Activated B cell treated with CpG ODN at 0.5 μM for 24 hours (primary cell): ENCODE measurements at regions of chr6 and their contacts with region 1.

Region 1: GRCh38 chr6:99746261-99746895 is 139.7 kb downstream of the PRDM13 start:
- DNase-seq: no peak
- ATAC-seq: peak; percentile 82
- H3K4me3 Mint-ChIP-seq: no peak overlapping the region
- H3K27ac Mint-ChIP-seq: no peak overlapping the region
- H3K4me1 Mint-ChIP-seq: no peaks in the 10 kb centered on the region
- H3K27me3 Mint-ChIP-seq: peaks cover 21% of the 10 kb centered on the region
- CTCF ChIP-seq: peak; percentile 16

Region 2: GRCh38 chr6:99330159-99330558 is 416.2 kb before region 1 on chr6:
- CTCF ChIA-PET with region 1: interaction called, 8 read pairs
- POLR2A ChIA-PET with region 1: no interaction called
- intact Hi-C with region 1: loop called (anchors 1 kb)
- DNase-seq: no peak
- ATAC-seq: peak; percentile 82
- H3K4me3 Mint-ChIP-seq: no peak overlapping the region
- H3K27ac Mint-ChIP-seq: no peak overlapping the region
- H3K4me1 Mint-ChIP-seq: peaks cover 14% of the 10 kb centered on the region
- H3K27me3 Mint-ChIP-seq: no peaks in the 10 kb centered on the region
- CTCF ChIP-seq: peak; percentile 71

Region 3: DNA sequence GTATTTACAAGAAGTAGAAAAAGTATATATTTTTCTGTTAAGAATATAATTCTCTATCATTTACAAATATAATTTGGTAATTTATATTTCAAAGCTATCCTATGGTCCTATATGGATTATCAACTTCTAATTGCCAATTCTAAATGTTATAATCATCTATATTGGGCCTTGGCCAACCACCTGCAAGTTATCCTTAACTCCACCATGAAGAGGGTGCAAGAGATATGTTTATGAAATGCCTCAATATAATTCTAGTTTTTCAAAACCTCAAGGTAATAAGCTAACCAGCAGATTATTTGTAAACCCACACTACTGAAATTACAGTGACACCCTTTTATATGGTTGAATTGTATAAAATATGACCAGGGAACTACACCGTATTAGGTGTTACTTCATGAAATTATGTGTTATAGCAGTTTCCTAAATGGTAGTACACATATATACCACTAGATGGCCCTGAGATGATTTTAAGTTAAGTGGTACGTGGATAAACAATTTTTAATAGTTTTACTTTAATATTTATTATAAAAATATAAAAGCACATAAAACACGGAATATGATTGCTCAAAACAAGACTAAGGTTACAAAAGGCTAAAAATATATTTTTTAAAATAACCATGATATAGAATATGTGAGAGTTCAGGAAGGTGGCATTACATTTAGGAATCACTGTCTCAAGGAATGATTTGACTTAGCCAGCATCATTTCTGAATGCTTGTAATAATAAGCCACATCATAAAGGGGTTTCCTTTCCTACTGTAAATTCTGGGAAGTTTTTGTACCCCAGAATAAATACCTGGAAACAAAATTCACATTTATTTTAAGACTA is 311.5 kb before region 1 on chr6:
- CTCF ChIA-PET with region 1: interaction called, 16 read pairs
- POLR2A ChIA-PET with region 1: no interaction called
- intact Hi-C with region 1: loop called (anchors 1 kb)
- DNase-seq: no peak
- ATAC-seq: peak; percentile 79
- H3K4me3 Mint-ChIP-seq: no peak overlapping the region
- H3K27ac Mint-ChIP-seq: no peak overlapping the region
- H3K4me1 Mint-ChIP-seq: peaks cover 3% of the 10 kb centered on the region
- H3K27me3 Mint-ChIP-seq: no peaks in the 10 kb centered on the region
- CTCF ChIP-seq: no peak

Region 4: GRCh38 chr6:99520855-99521632 is 225.3 kb before region 1 on chr6:
- CTCF ChIA-PET with region 1: no interaction called
- POLR2A ChIA-PET with region 1: interaction called, 3 read pairs
- intact Hi-C with region 1: loop called (anchors 1 kb)
- DNase-seq: peak; percentile 71
- ATAC-seq: peak; percentile 86
- H3K4me3 Mint-ChIP-seq: peak overlapping the region; percentile 99
- H3K27ac Mint-ChIP-seq: peak overlapping the region; percentile 97
- H3K4me1 Mint-ChIP-seq: peaks cover 41% of the 10 kb centered on the region
- H3K27me3 Mint-ChIP-seq: no peaks in the 10 kb centered on the region
- CTCF ChIP-seq: peak; percentile 33

Region 5: DNA sequence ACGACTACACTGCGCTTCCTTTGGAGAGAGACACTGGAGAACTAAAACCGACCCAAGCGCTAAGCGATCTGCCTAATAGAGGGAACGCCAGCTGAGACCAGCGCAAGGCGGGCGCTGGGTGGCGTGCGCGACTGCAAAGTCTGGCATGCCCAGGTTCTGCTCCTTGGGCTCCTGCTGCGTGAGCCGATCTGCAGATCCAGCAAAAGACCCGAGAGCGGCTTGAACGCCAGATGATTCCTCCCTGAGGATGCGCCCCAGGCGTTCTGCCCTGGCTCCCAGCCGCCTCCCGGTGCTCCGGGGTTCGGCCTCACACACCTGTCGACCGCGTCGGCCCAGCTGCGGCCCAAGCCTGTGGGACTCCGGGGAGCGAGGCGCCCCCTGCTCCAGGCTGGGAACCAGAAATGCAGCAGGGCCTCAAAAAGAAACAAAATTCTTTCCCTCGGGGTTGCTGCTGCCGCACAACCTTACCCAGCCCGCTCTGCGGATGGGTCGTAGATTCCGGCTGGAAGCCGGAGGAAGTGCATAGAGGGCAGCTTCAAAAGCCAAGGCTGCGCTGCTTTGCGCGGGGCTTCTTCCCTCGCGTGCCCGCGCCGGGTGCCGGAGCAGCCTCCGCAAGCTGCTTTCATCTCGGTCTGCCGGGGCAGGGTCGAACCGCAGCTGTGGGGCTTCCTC is 157.6 kb before region 1 on chr6:
- CTCF ChIA-PET with region 1: interaction called, 23 read pairs
- POLR2A ChIA-PET with region 1: no interaction called
- intact Hi-C with region 1: loop called (anchors 1 kb)
- DNase-seq: peak; percentile 38
- ATAC-seq: peak; percentile 83
- H3K4me3 Mint-ChIP-seq: peak overlapping the region; percentile 86
- H3K27ac Mint-ChIP-seq: peak overlapping the region; percentile 46
- H3K4me1 Mint-ChIP-seq: peaks cover 30% of the 10 kb centered on the region
- H3K27me3 Mint-ChIP-seq: peaks cover 56% of the 10 kb centered on the region
- CTCF ChIP-seq: no peak

Region 6: GRCh38 chr6:99905209-99906106 is 159.1 kb after region 1 on chr6:
- CTCF ChIA-PET with region 1: no interaction called
- POLR2A ChIA-PET with region 1: no interaction called
- intact Hi-C with region 1: no loop called
- DNase-seq: no peak
- ATAC-seq: no peak
- H3K4me3 Mint-ChIP-seq: no peak overlapping the region
- H3K27ac Mint-ChIP-seq: no peak overlapping the region
- H3K4me1 Mint-ChIP-seq: no peaks in the 10 kb centered on the region
- H3K27me3 Mint-ChIP-seq: no peaks in the 10 kb centered on the region
- CTCF ChIP-seq: no peak